ENCODE measurements at regions of chr7 and their contacts with region 1.

Region 1: DNA sequence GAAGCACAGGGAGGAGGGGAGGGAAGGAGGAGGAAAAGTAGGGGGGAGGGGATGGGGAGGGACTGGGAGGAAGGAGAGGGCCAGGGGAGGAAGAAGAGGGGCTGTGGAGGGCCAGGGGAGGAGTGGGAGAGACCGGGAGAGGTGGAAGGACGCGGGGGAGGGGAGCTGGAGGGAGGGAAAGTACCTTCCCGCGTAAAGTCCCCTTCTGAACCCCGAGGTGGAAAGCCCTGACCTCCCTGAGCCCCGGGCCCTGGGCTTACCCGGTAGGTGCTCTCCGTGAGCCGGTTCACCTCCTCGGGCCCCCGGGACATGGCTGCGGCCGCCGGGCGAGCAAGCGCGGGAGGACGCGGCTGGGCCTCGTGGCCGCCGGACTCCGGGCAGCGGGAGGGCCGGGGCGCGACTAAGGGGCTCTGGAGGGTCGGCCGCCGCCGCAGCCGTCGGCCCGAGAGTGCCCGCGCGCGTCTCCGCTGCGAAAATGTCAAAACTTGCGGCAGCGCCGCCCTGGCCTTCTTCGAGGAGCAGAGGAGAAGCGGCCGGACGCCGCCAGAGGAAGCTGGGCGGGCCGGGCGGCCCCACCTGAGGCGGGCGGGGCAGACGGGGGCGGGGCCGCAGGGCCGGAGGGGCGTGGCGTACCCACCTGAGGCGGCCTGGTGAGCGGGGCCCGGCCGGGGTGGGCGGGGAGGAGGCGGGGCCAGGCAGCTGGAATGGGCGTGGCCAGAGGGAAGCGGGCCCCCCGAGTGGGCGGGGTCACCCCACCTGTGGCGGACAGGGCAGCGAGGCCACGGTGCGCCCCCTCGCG is at the start of gene BAIAP2L1:
- H3K4me3 ChIP-seq: peak within 1 kb of the TSS; percentile 55
- H3K27ac ChIP-seq: peak within 1 kb of the TSS; percentile 98
- H3K4me1 ChIP-seq: no peaks in the 10 kb centered on the region
- CTCF ChIP-seq: no peak

Region 2: GRCh38 chr7:98294796-98295382 is 105.9 kb before region 1 on chr7:
- CTCF ChIA-PET with region 1: interaction called, 28 read pairs
- POLR2A ChIA-PET with region 1: interaction called, 6 read pairs
- H3K4me3 ChIP-seq: no peak overlapping the region
- H3K27ac ChIP-seq: no peak overlapping the region; the same call in 1 of the 2 replicates
- H3K4me1 ChIP-seq: no peaks in the 10 kb centered on the region
- CTCF ChIP-seq: peak; percentile 94

Region 3: DNA sequence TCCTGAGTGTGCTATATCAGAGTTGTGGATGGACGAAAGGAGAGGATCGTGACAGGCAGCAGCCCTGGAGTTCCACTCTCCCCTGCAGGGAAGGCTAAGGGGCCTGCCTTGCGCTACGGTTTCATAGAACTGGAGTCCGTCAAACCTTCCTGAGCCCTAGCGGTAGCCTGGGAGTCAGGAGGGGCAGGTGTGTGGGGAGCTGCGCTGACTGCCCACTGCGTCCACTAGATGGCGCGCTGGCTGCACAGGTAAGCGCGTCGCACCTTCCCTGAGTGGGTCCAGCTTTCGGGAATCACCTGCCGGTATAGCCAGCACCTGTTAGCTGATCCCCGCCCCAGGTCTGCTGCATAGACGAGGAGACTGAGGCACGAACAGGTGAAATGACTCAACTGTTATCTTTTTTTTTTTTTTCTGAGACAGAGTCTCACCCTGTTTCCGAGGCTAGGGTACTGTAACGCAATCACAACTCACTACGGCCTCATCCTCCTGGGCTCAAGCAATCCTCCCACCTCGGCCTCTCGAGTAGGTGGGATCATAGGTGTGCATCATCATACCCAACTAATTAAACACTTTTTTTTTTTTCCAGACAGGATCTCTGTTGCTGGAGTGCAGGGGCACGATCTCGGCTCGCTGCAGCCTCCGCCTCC is 20.3 kb after region 1 on chr7:
- CTCF ChIA-PET with region 1: interaction called, 16 read pairs
- POLR2A ChIA-PET with region 1: interaction called, 3 read pairs
- H3K4me3 ChIP-seq: no peak overlapping the region
- H3K27ac ChIP-seq: no peak overlapping the region
- H3K4me1 ChIP-seq: no peaks in the 10 kb centered on the region
- CTCF ChIP-seq: peak; percentile 96